Heart right ventricle (tissue), 16 donors: ENCODE measurements at regions of chr1 and their contacts with region 1.

Region 1: GRCh38 chr1:119929643-119930315 is 33.5 kb upstream of the ADAM30 start:
- DNase-seq: no peak
- ATAC-seq: no peak
- H3K4me3 ChIP-seq: no peak overlapping the region
- H3K27ac ChIP-seq: no peak overlapping the region
- H3K4me1 ChIP-seq: peaks cover 0 to 7% (median 0%) of the 10 kb centered on the region in 9 donors
- H3K27me3 ChIP-seq: no peaks in the 10 kb centered on the region
- CTCF ChIP-seq: no peak

Region 2: DNA sequence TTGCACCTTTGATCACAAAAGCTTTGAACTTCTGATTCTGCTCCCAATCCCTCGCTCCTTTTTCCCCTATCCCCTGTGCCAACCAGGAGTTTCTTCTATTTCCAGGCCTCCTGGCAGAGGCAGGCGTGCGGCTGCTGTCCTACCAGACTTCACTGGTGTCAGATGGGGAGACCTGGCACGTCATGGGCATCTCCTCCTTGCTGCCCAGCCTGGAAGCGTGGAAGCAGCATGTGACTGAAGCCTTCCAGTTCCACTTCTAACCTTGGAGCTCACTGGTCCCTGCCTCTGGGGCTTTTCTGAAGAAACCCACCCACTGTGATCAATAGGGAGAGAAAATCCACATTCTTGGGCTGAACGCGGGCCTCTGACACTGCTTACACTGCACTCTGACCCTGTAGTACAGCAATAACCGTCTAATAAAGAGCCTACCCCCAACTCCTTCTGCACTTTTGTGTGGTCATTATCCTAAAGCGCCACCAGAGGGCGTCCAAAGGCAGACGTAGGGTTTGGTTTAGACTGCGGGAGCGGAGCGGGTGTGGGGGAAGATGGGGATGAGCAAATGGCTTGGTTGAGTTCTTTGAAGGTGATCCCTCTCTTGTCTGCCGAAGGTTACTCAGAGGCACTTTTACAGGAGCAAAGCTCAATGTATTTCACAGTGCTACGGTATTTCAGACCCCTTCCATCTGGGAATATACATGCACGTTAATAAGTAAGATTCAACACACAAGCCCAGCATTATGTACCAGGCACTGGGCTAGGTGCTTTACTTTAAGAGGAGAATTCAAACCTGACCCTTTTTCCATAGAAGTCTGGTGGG is 185.8 kb before region 1 on chr1:
- intact Hi-C with region 1: no loop called
- DNase-seq: peak; percentile 44 to 50
- ATAC-seq: peak in 7 of 8 donors; percentile 53 to 70 (median 63)
- H3K4me3 ChIP-seq: no peak overlapping the region
- H3K27ac ChIP-seq: peak overlapping the region in 4 of 10 donors; percentile 1 to 33 (median 28)
- H3K4me1 ChIP-seq: peaks cover 0 to 46% (median 9%) of the 10 kb centered on the region in 9 donors
- H3K27me3 ChIP-seq: no peaks in the 10 kb centered on the region
- CTCF ChIP-seq: peak; percentile 55 to 86 (median 79)

Region 3: DNA sequence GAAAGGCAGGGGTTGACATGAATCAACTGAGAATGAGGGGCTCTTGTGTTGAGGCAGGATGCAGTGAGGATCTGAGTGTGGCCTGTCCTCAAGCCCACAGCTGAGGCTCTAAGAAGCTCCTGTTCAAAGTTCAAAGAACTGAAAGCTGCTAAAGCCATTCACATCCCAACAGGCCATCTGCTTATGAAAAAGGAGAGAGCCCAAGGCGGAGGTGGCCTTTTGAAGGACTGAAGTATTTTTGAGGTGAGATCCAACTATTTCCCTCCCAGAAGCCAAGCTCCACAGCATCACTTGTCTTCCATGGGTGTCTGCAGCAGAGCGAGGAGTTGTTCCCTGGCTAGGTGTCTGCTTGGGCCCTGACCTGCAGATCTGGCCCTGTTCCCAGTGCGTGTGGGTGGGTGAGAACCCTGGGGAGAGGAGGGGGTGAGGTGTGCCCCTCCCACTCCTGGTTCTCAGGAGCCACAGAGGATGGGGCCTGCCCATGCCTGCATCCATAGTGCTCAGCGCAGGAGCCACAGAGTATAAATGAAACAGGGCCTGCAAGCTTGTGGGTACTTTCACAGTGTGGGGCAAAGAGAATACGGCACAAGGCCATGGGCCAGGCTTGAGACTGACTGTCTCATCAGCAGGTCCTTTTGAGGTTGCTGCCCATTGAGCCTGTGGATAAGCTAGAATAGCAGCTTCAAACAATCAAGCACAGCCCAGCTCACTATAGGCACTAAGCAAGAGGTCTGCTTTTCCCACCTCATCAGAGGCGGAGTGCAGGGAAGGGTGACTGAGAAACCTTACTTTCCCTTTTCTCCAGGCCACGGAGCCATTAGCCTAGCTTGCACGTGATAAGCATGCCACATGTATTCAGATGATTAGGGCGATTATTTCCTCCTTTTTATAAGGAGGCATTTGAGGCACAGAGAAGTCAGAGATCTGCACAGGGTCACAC is 134.2 kb before region 1 on chr1:
- intact Hi-C with region 1: no loop called
- DNase-seq: no peak
- ATAC-seq: no peak
- H3K4me3 ChIP-seq: no peak overlapping the region
- H3K27ac ChIP-seq: no peak overlapping the region
- H3K4me1 ChIP-seq: peaks cover 0 to 10% (median 0%) of the 10 kb centered on the region in 9 donors
- H3K27me3 ChIP-seq: peaks cover 0 to 10% (median 0%) of the 10 kb centered on the region in 7 donors
- CTCF ChIP-seq: no peak

Region 4: DNA sequence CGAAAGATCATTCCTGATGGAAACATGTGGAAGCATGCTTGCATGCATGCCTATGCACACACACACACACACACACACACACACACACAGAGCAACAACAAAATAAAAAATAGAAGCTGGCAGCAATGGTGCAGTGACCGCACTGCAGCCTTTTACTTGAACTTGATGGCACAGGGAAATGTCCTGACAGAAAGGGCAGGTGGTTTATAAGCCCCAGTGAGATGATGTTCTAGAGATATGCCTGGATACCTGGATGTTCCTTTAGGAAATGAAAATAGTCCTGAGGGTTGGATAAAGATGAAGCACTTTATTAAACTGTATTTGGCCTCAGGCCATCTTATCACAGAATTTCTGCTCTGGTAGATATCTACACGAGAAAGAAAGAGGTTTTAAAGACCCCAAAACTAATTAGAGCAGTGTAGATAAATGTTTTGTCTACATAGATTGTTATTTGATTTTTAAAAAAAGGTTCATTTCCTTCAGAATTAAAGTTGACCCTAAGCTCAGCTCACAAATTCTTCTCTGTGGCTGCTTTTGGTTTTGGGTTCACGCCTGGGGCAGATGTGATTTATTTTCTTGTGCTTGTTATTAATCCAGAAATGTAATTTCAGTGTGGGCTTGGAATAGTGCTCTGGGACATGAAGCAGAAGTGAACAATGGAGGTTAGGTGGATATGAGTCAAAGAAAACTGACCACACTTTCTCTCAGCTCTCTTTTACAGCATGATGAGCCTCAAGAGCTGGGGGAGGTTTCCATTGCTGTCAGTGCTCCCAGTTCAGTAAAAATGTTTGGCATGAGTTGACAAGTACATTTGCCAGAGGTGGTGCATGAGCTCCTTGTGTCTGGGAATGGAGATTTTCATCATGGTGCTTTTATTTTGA is 56.4 kb before region 1 on chr1:
- intact Hi-C with region 1: no loop called
- DNase-seq: peak in 1 of 2 donors; percentile 16
- ATAC-seq: peak in 6 of 8 donors; percentile 16 to 69 (median 56)
- H3K4me3 ChIP-seq: no peak overlapping the region
- H3K27ac ChIP-seq: peak overlapping the region in 1 of 10 donors; percentile 36
- H3K4me1 ChIP-seq: peaks cover 0 to 15% (median 6%) of the 10 kb centered on the region in 9 donors
- H3K27me3 ChIP-seq: peaks cover 0 to 5% (median 0%) of the 10 kb centered on the region in 7 donors
- CTCF ChIP-seq: no peak

Region 5: GRCh38 chr1:119885903-119886783 is 43.6 kb before region 1 on chr1:
- intact Hi-C with region 1: loop called in 1 of 10 experiments (anchors 10 kb)
- DNase-seq: peak; percentile 41 to 42
- ATAC-seq: peak in 5 of 8 donors; percentile 46 to 73 (median 66)
- H3K4me3 ChIP-seq: no peak overlapping the region
- H3K27ac ChIP-seq: no peak overlapping the region
- H3K4me1 ChIP-seq: peaks cover 0 to 4% (median 0%) of the 10 kb centered on the region in 9 donors
- H3K27me3 ChIP-seq: peaks cover 0 to 23% (median 8%) of the 10 kb centered on the region in 7 donors
- CTCF ChIP-seq: peak; percentile 41 to 80 (median 68)